Activated T-helper 1 cell treated with anti-CD3 and anti-CD28 coated beads, Interleukin-12 subunit alpha, Interleukin-12 subunit beta, Interleukin-2, Interleukin-4 antibody, amounts not matched to agents 30 ng/mL and 10 ng/mL and 1 ng/mL, durations not matched to agents 14 hours and 24 hours and 36 hours (primary cell): ENCODE measurements at regions of chr15 and their contacts with region 1.

Region 1: DNA sequence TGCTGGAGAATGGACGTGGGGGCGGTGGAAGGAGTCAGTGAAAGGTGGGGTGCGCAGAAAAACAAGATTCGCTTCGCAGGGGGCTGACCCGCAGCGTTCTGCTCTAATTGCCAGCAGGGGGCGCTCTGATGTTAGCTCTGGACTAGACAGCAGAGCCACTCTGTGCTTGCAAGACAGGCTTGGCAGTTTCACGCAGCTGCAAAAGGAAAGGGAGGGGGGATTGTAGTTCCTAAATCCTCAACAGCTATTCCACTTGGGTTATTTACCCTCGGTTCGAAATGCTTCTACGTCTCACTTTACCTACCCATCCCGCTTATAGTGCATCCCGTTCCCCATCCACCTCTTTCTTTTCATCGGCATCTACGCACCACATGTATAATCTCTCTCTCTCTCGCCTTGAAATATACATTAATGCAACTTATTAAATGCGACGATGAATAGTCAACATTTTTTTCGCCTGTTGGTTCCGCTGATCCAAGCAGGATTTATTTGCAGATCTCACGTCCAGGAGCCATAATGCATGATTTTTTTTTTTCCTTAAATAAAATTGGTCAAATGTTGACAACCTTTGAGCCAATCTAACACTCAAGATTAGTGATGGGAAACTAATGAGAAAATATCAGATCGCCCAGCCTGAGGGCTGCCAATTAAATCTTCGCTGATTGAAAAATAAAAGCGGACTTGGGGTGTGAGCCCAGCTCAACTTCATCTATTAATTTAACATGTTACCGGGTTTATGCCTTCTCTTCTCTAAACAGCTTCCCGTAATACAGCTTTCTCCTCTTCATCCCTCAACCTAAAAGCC is 216.4 kb downstream of the MEIS2 start:
- DNase-seq: peak; percentile 48
- H3K4me3 Mint-ChIP-seq: no peak overlapping the region
- H3K27ac Mint-ChIP-seq: peak overlapping the region; percentile 58
- H3K4me1 Mint-ChIP-seq: no peaks in the 10 kb centered on the region
- H3K27me3 Mint-ChIP-seq: peaks cover 89% of the 10 kb centered on the region

Region 2: GRCh38 chr15:36501063-36501678 is 382.7 kb before region 1 on chr15:
- intact Hi-C with region 1: loop called (anchors 5 kb)
- DNase-seq: no peak
- H3K4me3 Mint-ChIP-seq: no peak overlapping the region
- H3K27ac Mint-ChIP-seq: no peak overlapping the region
- H3K4me1 Mint-ChIP-seq: no peaks in the 10 kb centered on the region
- H3K27me3 Mint-ChIP-seq: peaks cover 9% of the 10 kb centered on the region

Region 3: DNA sequence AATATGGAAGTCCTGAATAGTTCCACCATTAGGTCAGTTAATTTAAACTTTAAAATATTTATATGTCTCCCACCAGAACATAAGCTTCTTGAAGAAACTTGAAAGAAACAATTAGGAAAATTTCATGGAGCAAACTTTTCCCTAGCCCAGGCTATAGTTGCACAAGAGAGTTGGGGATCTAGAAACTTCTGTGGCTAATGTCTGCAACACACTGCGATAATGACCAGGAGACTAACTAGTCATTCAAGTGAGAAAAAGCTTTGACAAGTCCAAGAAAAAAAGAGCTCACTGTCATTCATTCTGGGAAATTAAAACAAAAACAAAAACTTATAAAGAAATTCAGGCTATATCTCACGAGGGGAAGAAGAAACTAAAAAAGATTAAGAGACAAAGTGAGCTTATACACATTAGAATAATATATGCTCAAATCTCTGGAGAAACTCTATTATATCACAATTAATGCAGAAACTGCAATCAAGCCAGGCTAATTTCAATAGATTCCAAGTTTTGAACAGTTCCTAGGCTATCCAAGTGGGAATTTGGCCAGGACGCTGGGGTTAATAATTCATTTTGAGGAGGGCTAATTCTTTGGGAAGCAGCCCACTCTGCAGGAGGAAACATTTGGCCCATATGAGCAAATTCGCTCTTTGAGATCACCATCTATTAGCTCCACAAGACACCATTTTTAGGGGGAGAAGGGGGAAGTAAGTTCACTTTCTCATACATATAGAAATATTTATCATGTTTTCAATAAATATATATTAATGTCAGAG is 81.8 kb after region 1 on chr15:
- intact Hi-C with region 1: no loop called
- DNase-seq: no peak
- H3K4me3 Mint-ChIP-seq: no peak overlapping the region
- H3K27ac Mint-ChIP-seq: no peak overlapping the region
- H3K4me1 Mint-ChIP-seq: no peaks in the 10 kb centered on the region
- H3K27me3 Mint-ChIP-seq: no peaks in the 10 kb centered on the region

Region 4: DNA sequence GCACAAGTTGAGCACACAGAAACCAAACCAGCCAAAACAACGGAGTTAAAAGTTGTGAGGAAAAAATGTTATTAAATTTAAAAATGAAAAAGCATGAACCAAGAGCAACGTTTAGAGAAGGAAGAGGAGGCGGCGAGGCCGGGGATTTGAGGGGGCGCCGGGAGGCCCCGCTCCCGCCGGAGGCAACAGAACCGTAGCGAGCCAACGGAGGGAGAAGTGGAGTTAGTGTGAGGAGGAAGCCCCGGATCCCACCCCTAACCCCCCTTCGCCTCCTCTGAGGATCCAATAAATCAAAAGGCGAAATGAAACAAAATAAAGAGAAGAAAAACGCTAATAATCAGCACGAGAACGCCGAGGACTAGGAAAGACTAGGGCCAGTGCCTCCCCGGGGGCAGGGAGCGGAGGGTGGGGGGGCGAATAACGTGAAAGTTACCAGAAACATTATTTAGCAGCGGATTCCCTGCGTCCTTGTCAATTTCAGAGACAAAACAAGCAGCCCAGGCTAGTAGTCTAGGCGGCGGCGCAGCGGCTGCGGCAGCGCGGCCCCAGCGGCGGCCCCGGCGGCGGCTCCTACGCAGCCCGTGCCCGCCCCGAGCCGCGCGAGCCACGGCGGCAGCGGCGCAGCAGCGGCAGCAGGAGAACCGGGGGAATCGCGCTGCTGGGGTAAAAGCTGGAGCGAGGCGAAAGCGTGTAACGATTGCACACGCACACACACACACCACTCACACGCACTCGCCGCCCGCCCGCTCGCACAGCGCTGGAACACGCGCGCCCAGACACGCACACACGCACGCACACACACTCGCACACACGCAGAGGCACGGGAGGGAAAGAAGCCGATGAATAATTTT is 214.8 kb after region 1 on chr15:
- intact Hi-C with region 1: loop called (anchors 2 kb)
- DNase-seq: no peak
- H3K4me3 Mint-ChIP-seq: peak overlapping the region; percentile 64
- H3K27ac Mint-ChIP-seq: peak overlapping the region; percentile 29
- H3K4me1 Mint-ChIP-seq: peaks cover 25% of the 10 kb centered on the region
- H3K27me3 Mint-ChIP-seq: peaks cover 82% of the 10 kb centered on the region

Region 5: GRCh38 chr15:37891766-37892368 is 1008.0 kb after region 1 on chr15:
- intact Hi-C with region 1: loop called (anchors 2 kb)
- DNase-seq: no peak
- H3K4me3 Mint-ChIP-seq: no peak overlapping the region
- H3K27ac Mint-ChIP-seq: no peak overlapping the region
- H3K4me1 Mint-ChIP-seq: no peaks in the 10 kb centered on the region
- H3K27me3 Mint-ChIP-seq: peaks cover 8% of the 10 kb centered on the region

Region 6: DNA sequence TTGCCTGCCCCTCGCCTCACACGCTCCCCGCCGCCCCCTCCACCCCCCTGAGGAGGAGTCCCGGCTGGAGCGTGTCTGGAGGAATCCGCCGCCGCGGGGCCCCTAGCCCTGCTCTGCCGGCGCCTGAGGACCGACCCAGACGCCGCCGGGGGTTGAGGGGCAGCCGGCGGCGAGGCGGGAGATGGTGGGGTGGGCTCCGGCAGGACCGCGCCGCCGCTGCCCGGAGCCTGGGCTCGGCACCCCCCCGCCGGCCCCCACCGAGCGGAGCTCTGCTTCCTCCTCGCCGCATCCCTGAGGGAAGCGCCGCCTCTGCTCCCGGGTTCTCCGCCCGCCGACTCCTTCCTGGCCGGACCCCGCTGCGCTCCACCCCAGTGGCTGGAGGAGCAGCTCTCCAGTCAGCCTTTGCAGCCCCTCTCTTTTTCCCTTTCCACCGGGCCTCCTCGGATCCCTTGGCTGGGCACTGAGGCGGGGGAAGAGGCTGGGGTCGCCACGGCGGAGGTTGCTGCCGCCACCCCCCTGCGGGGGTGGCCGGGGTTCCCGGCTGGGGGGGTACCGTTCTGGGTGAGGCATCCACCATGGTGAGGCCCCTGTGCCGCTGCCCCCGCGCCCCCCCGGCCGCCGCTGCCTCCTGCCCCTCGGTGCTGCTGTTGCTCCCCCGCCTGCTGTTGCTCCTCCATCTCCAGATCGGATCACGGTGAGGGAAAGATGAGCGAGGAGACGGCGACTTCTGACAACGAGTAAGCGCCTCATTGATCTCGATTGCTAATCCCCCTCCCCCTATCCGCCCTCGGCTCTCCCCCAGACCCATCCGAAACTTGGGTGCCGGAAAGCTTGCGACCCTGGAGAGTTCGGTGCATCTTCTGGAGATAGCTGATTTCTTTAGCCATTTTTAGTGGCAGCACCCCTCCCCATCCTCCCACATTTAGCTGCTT is 1368.8 kb after region 1 on chr15 and contains the start of gene SPRED1:
- intact Hi-C with region 1: loop called (anchors 10 kb)
- DNase-seq: no peak
- H3K4me3 Mint-ChIP-seq: peak within 1 kb of the TSS; percentile 79
- H3K27ac Mint-ChIP-seq: peak within 1 kb of the TSS; percentile 69
- H3K4me1 Mint-ChIP-seq: peaks cover 27% of the 10 kb centered on the region
- H3K27me3 Mint-ChIP-seq: peaks cover 68% of the 10 kb centered on the region
- total RNA-seq, gene SPRED1: 0.49 and 0.54 TPM in 2 replicates

Region 7: DNA sequence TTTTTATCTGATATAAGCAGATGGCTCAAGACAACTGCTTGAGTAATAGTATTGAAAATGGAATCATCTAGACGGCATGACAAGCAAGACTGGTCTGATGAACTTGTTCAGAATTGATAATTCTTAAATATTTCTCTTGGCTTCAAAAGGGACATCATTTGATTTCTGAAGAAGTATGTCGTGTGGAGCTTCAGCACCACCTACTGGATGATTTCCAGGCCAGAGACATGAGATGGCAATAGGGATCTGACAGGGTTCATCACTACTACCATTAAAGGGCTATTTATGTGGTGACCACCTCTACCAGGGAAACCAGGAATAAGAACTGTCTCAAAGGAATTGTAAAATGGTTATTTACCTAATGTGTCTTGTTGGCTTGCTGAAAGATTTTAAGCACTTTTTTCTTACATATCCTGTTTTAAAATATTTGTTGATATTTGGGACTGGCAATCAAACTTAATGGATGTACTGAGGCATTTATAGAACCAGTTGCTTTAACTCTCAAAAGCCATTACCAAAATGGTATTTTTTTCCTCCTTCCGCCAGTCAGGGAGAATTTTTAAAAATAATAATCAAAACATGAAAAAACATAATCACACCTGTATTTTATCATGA is 1470.5 kb after region 1 on chr15:
- intact Hi-C with region 1: loop called (anchors 10 kb)
- DNase-seq: peak; percentile 7
- H3K4me3 Mint-ChIP-seq: no peak overlapping the region
- H3K27ac Mint-ChIP-seq: no peak overlapping the region
- H3K4me1 Mint-ChIP-seq: no peaks in the 10 kb centered on the region
- H3K27me3 Mint-ChIP-seq: peaks cover 14% of the 10 kb centered on the region